ENCODE measurements at regions of chrX and their contacts with region 1.

Region 1: DNA sequence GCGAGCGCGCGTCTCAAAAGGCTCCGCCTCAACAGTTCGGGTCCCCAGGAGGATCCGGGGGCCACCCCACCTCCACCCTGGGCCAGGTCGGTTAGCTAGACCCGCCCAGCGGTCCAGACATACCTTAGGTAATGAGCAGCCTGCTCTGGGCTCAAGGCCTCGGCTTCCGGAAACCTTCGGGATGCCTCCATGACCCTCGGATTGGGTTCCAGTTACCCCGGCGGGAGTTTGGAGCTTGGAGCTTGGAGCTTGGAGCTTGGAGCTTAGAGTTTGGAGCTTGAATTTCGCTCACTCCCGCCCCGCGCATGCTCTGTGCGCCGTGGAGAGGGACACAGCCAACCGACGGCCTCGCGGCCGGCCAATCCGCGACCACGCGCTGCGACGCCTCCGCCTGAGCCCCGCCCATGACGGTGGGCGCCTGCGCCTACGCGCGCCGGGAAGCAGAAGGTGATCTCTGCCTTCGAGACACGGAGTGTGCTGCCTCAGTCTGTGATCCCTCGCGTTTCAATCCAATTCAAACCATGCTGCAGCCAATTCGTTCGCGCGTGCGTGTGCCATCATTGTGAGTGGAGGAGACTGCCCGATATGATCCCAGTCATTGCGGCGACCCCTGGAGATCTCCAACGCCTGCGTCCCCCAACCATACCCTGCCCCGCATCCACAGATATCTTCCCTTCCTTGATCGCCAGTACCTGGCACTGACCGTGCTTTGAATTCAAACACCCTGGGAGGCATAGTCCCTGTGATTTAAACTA is at the start of gene ERCC6L:
- DNase-seq: peak; percentile 70
- ATAC-seq: peak; percentile 98
- H3K4me3 ChIP-seq: peak within 1 kb of the TSS; percentile 60 to 71 (median 60)
- H3K27ac ChIP-seq: peak within 1 kb of the TSS; percentile 65
- H3K4me1 ChIP-seq: no peaks in the 10 kb centered on the region
- H3K27me3 ChIP-seq: no peaks in the 10 kb centered on the region
- CTCF ChIP-seq: no peak
- EP300 ChIP-seq: no peak
- POLR2A ChIP-seq: peak; percentile 28 to 70; a peak in 2 of 4 replicates
- RAD21 ChIP-seq: no peak
- total RNA-seq, gene ERCC6L: 9.5 and 15.6 TPM in 2 replicates

Region 2: DNA sequence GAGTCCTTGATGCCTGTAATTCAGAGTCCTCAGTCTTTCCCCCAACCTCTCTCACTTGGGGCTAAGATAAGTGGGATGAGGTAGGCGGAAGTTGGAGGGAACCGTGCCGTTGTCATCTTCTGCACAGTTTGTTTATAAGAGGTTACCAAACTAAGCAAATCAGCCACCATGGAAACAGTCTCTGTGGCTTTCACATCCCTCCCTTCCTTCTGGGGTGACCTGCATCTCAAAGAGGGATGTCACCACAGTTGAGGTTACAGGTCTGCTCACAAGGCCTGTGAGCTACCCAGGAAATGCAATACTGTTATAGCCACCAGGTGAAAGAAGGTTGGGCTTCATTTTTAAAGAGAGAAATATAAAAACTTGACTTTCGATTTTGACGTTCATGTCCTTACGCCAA is 133.5 kb before region 1 on chrX:
- CTCF ChIA-PET with region 1: no interaction called
- POLR2A ChIA-PET with region 1: no interaction called
- in situ Hi-C with region 1: no loop called
- intact Hi-C with region 1: no loop called
- DNase-seq: no peak
- ATAC-seq: no peak
- H3K4me3 ChIP-seq: no peak overlapping the region
- H3K27ac ChIP-seq: no peak overlapping the region
- H3K4me1 ChIP-seq: no peaks in the 10 kb centered on the region
- H3K27me3 ChIP-seq: no peaks in the 10 kb centered on the region
- CTCF ChIP-seq: no peak
- EP300 ChIP-seq: no peak
- POLR2A ChIP-seq: no peak
- RAD21 ChIP-seq: no peak

Region 3: DNA sequence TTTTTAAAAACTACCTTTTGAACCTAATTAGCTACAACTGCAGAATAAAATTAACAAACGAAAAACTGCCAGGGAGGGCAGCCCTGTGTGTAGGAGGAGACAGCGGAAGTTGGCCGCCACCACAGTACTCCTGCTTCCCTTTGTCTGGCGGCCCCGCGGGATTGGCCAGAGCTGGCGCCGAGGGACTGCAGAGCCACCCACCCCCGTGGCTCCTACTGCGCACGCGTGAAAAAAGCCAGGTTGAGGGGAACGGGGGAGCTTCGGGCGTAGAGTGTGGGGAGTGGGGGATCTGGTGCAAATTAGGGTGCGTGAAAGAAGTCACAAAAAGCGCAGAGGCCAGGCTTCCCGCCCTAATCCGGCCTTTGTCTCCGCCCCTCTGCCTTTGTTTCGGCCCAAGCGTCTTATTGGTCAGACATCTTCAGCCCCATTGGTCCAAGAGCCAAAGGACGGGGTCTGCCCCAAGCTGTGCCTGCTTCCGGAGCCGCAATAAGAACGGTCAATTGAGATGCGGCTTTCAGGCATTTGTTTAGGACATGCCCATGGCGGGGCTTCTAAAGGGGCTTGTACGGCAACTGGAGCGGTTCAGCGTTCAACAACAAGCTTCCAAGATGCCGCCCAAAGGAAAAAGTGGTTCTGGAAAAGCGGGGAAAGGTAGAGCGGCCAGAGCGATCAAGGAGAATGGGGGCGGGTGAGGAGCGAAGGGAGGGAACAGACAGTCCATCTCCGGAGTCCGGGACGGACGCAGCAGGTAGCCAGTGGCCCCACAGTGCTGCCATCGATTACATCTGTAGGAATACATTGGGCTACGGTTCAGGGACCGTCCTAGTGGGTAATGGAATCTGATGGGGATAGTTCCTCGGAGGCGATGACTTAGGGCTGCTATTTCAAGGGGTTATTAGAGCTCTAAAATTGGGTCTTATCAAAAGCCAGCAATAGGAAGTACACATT is 57.4 kb before region 1 on chrX and contains the start of gene PIN4:
- CTCF ChIA-PET with region 1: no interaction called
- POLR2A ChIA-PET with region 1: interaction called, 4 read pairs
- in situ Hi-C with region 1: no loop called
- intact Hi-C with region 1: loop called (anchors 10 kb)
- DNase-seq: peak; percentile 95
- ATAC-seq: peak; percentile 98
- H3K4me3 ChIP-seq: peak within 1 kb of the TSS; percentile 83 to 86 (median 85)
- H3K27ac ChIP-seq: peak within 1 kb of the TSS; percentile 88
- H3K4me1 ChIP-seq: peaks cover 13% of the 10 kb centered on the region
- H3K27me3 ChIP-seq: no peaks in the 10 kb centered on the region
- CTCF ChIP-seq: no peak
- EP300 ChIP-seq: no peak
- POLR2A ChIP-seq: peak; percentile 56 to 65
- RAD21 ChIP-seq: no peak
- total RNA-seq, gene PIN4: 29.5 and 43.2 TPM in 2 replicates

Measured in HepG2 (cell line).